ENCODE measurements at regions of chr7 and their contacts with region 1.

Region 1: DNA sequence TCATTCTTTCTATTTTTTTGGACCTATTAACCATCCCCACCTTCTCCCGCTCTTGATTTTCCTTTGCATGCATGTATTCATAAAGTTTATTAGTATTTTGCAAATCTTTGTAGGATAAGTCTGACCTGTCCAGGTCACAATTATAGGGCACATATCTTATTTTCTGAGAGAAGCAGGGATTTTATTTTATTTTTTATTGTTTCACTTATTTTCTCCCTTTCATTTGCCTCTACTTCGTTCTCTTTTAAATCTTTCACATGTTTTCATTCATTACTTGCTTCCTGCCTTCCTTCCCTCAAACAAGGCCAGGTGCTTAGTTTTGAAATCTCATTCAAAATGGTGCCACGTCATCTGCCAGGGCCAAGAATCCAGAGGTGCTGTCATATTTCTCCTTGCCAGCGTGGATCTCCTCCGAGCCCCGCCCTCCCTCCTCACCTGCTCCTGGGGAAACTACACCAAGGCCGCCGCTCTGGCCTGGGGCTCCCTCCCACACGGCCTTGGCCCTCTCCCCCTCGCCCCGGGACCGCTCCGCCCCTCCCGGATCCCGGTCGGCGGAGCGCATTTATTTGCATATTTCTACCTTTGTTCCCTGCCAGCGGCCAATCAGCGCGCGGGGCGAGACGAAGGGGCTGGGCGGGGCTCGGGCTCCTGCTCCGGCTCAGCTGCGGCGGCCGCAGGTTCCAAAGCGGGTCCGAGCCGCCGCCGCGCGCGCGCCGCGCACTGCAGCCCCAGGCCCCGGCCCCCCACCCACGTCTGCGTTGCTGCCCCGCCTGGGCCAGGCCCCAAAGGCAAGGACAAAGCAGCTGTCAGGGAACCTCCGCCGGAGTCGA is at the start of gene TSPAN13:
- DNase-seq: peak; percentile 86
- H3K4me3 ChIP-seq: peak within 1 kb of the TSS; percentile 93
- H3K27ac ChIP-seq: peak within 1 kb of the TSS; percentile 53
- H3K4me1 ChIP-seq: peaks cover 20% of the 10 kb centered on the region
- CTCF ChIP-seq: no peak
- total RNA-seq, gene TSPAN13: 4.5 and 5.0 TPM in 2 replicates

Region 2: GRCh38 chr7:16587790-16588189 is 165.5 kb before region 1 on chr7:
- CTCF ChIA-PET with region 1: no interaction called
- POLR2A ChIA-PET with region 1: no interaction called
- intact Hi-C with region 1: no loop called
- DNase-seq: no peak
- H3K4me3 ChIP-seq: no peak overlapping the region
- H3K27ac ChIP-seq: no peak overlapping the region
- H3K4me1 ChIP-seq: no peaks in the 10 kb centered on the region
- CTCF ChIP-seq: no peak

Region 3: GRCh38 chr7:16645593-16646471 is 107.5 kb before region 1 on chr7 and contains the starts of genes ANKMY2 and BZW2:
- CTCF ChIA-PET with region 1: no interaction called
- POLR2A ChIA-PET with region 1: interaction called, 3 read pairs
- intact Hi-C with region 1: loop called (anchors 5 kb)
- DNase-seq: peak; percentile 95
- H3K4me3 ChIP-seq: peak within 1 kb of the TSS; percentile 96
- H3K27ac ChIP-seq: peak within 1 kb of the TSS; percentile 35
- H3K4me1 ChIP-seq: peaks cover 34% of the 10 kb centered on the region
- CTCF ChIP-seq: no peak
- total RNA-seq, gene ANKMY2: 10.3 and 11.9 TPM in 2 replicates
- total RNA-seq, gene BZW2: 66.8 and 84.9 TPM in 2 replicates

Measured in OCI-LY7 (cell line).